ENCODE measurements at regions of chr9 and their contacts with region 1.

Region 1: GRCh38 chr9:124771021-124771866 is at the start of gene NR6A1:
- H3K4me3 ChIP-seq: peak within 1 kb of the TSS; percentile 96
- H3K27ac ChIP-seq: peak within 1 kb of the TSS; percentile 91
- H3K4me1 ChIP-seq: peaks cover 16% of the 10 kb centered on the region; the same call in 1 of the 2 replicates
- CTCF ChIP-seq: peak; percentile 51; the same call in 1 of the 2 replicates

Region 2: GRCh38 chr9:124754289-124754688 is 17.0 kb before region 1 on chr9:
- CTCF ChIA-PET with region 1: interaction called, 17 read pairs
- POLR2A ChIA-PET with region 1: interaction called, 6 read pairs
- H3K4me3 ChIP-seq: no peak overlapping the region
- H3K27ac ChIP-seq: no peak overlapping the region
- H3K4me1 ChIP-seq: peaks cover 34% of the 10 kb centered on the region
- CTCF ChIP-seq: no peak

Region 3: GRCh38 chr9:124812401-124813016 is 41.3 kb after region 1 on chr9:
- CTCF ChIA-PET with region 1: interaction called, 97 read pairs
- POLR2A ChIA-PET with region 1: interaction called, 7 read pairs
- H3K4me3 ChIP-seq: no peak overlapping the region
- H3K27ac ChIP-seq: no peak overlapping the region; the same call in none of the 2 replicates
- H3K4me1 ChIP-seq: 0 out of 2 replicates have a peak, but pooled peaks cover 3% of the 10 kb centered on the region
- CTCF ChIP-seq: no peak

Region 4: GRCh38 chr9:124861342-124862229 is 90.3 kb after region 1 on chr9 and contains the starts of genes ARPC5L and RPL35:
- CTCF ChIA-PET with region 1: interaction called, 1,257 read pairs
- POLR2A ChIA-PET with region 1: interaction called, 201 read pairs
- H3K4me3 ChIP-seq: peak within 1 kb of the TSS; percentile 86
- H3K27ac ChIP-seq: peak within 1 kb of the TSS; percentile 100
- H3K4me1 ChIP-seq: no peaks in the 10 kb centered on the region
- CTCF ChIP-seq: peak; percentile 59; the same call in 1 of the 2 replicates

Region 5: GRCh38 chr9:124894741-124895170 is 123.5 kb after region 1 on chr9:
- CTCF ChIA-PET with region 1: interaction called, 15 read pairs
- POLR2A ChIA-PET with region 1: no interaction called
- H3K4me3 ChIP-seq: no peak overlapping the region
- H3K27ac ChIP-seq: no peak overlapping the region
- H3K4me1 ChIP-seq: no peaks in the 10 kb centered on the region
- CTCF ChIP-seq: peak; percentile 49; the same call in 1 of the 2 replicates

Measured in HEK293 (cell line).